ENCODE measurements at regions of chr2 and their contacts with region 1.

Region 1: DNA sequence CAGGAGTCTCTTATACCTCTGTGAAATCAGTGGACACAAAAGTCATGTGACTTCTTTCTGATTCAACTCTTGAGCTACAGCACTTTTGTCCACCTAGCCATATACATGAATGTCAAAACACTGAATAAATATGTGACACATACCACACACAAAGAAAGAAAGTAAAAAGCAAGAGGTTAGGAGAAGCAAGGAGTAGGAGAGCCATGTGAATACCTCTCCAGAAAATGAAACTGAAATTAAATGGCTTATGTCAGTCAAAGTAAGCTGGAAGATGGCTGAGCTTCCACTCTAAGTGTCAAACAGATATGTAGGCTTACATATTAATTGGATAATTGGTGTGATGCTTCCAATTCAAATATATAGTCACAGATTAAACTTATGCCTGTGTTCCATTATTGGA is 1050.5 kb downstream of the BCL11A start:
- DNase-seq: no peak
- H3K4me3 ChIP-seq: no peak overlapping the region
- H3K27ac ChIP-seq: no peak overlapping the region
- H3K4me1 ChIP-seq: no peaks in the 10 kb centered on the region
- H3K27me3 ChIP-seq: no peaks in the 10 kb centered on the region
- CTCF ChIP-seq: no peak
- EP300 ChIP-seq: no peak
- POLR2A ChIP-seq: no peak

Region 2: DNA sequence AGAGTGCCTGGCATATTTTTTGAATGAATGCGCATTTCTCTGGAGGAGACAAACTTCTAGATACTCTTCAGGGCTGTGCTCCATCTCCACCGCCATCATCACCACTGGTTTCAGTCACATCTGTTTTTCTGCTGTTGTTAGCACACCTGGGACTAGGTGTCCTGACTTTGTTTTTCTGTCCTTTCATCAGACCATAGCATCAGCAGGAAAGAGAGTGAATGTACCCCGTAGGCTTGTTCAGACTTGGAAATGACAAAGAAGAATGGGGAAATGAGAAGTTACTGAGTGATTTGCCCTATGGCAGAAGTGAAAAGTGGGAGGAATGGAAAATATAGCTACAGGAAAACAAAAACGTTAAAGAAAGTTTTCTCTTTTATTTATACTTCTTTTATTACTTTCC is 296.6 kb before region 1 on chr2:
- intact Hi-C with region 1: no loop called
- DNase-seq: no peak
- H3K4me3 ChIP-seq: no peak overlapping the region
- H3K27ac ChIP-seq: no peak overlapping the region
- H3K4me1 ChIP-seq: no peaks in the 10 kb centered on the region
- H3K27me3 ChIP-seq: no peaks in the 10 kb centered on the region
- CTCF ChIP-seq: no peak
- EP300 ChIP-seq: no peak
- POLR2A ChIP-seq: no peak

Region 3: DNA sequence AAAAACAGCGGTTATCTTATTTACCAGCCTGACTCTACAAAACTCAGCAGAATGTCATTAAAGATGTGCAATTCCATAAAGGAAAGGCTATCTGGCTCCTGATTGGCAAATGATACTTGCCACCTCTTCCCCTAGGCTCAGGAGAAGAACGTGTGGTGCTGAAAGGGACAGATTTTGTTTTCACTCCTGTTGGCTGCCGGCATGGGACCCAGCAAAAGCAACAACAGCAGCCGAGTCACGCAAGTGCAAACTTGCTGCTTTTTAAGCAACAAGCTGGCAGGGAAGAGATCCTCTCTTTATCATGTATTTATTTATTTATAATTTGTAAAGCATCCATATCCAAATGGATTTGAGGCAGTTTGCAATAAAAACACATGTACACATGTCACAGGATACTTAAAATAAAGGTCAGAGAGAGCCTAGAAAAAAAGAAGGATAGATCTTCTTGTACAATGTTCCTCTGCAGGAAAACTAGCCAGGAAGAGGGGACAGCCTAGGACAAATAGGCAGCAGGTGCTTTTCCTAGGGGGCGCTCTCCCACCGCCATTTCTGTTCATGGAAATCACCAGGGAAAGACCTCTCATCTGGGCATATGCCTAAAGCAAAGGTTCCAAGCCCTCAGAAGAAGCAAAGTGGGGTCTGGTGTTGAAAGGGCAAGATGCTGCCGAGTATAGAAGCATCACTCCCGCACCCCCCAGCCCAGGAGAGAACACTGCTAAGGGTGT is 251.2 kb after region 1 on chr2:
- intact Hi-C with region 1: loop called in 1 of 4 experiments (anchors 10 kb)
- DNase-seq: no peak
- H3K4me3 ChIP-seq: no peak overlapping the region
- H3K27ac ChIP-seq: no peak overlapping the region
- H3K4me1 ChIP-seq: no peaks in the 10 kb centered on the region
- H3K27me3 ChIP-seq: no peaks in the 10 kb centered on the region
- CTCF ChIP-seq: no peak
- EP300 ChIP-seq: no peak
- POLR2A ChIP-seq: no peak